ENCODE measurements at regions of chr2 and their contacts with region 1.

Region 1: GRCh38 chr2:168346725-168347477 is 99.5 kb upstream of the STK39 start:
- DNase-seq: peak in 1 of 2 donors; percentile 73
- H3K4me3 ChIP-seq: peak overlapping the region; percentile 46 to 70
- H3K27ac ChIP-seq: no peak overlapping the region
- H3K4me1 ChIP-seq: no peaks in the 10 kb centered on the region
- H3K27me3 ChIP-seq: no peaks in the 10 kb centered on the region
- CTCF ChIP-seq: peak; percentile 74 to 81 (median 78)

Region 2: DNA sequence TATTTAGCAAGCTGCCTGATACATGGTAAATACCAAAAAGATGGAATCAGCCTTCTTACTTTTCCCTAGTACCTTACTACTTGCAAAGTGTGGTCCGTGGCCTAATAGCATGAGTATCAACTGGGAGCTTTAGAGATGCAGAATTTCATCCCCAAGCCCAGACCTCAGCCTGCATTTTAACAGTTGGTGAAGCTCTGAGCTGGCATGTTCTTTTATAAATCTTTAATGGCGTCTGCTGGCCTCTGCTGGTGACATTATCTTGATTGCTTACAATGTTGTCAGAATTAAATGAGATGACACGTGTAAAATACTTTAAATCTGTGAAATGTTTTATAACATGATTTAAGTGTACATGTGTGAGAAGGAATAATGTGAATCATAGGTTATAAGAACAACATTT is 340.4 kb after region 1 on chr2:
- intact Hi-C with region 1: loop called (anchors 2 kb)
- DNase-seq: no peak
- H3K4me3 ChIP-seq: no peak overlapping the region
- H3K27ac ChIP-seq: no peak overlapping the region
- H3K4me1 ChIP-seq: no peaks in the 10 kb centered on the region
- H3K27me3 ChIP-seq: no peaks in the 10 kb centered on the region
- CTCF ChIP-seq: peak in 1 of 3 experiments; percentile 25

Region 3: GRCh38 chr2:168705534-168706470 is 358.9 kb after region 1 on chr2:
- intact Hi-C with region 1: loop called (anchors 5 kb)
- DNase-seq: no peak
- H3K4me3 ChIP-seq: no peak overlapping the region
- H3K27ac ChIP-seq: no peak overlapping the region
- H3K4me1 ChIP-seq: no peaks in the 10 kb centered on the region
- H3K27me3 ChIP-seq: no peaks in the 10 kb centered on the region
- CTCF ChIP-seq: peak in 1 of 3 experiments; percentile 20

Region 4: DNA sequence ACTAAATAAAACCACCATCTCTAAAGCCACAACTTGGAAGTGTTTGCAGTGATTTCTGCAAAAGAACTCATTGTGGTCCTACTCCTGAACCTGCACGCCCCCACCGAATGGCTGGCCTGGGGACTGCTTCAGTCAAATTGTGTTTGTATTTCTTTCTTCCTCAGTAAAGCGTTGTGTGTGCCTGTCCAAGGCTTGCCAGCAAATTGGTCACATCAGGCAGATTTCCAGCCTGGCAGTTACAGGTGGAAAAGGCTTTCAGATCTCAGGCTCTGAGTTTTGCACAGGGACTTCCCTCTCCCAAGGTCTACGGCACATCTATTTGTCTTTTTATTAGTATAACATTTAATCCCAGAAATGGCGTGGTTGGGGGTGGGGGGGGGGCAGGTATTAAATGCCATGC is 401.6 kb after region 1 on chr2:
- intact Hi-C with region 1: no loop called
- DNase-seq: no peak
- H3K4me3 ChIP-seq: no peak overlapping the region
- H3K27ac ChIP-seq: no peak overlapping the region
- H3K4me1 ChIP-seq: no peaks in the 10 kb centered on the region
- H3K27me3 ChIP-seq: no peaks in the 10 kb centered on the region
- CTCF ChIP-seq: no peak

Region 5: DNA sequence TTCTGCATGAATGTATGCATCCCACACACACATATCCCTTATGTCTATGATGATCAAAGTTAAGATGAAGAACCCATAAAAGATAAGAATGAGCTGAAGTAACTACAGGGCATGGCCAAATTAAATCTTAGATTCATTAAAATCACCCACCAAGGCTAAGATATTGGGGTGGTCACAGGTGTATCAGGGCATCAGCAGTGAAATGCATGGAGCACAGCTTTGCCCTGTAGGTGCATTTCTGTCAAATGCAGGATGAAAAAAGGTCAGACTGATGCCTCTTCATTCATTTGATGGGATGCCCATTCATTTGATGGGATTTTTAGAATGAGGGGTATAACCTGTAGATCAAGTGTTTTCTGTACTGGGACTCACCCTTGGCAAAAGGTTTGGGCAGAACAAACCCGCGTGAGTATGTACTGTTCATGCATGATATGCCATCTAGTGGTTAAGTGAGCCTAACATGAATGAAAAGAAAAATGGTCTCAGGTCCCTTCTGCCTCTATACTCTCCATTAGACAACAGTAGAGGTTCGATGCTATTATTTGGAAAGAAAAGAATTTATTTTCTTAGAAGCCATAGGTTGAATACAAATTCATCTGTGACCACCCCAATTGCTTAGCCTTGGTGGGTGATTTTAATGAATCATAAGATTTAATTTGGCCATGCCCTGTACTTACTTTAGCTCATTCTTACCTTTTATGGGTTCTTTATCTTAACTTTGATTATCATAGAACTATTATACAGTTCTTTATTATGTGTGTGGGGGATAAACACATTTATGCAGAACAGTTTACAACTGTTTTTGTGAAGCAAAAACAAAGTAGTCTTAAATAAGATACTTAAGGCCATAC is 412.3 kb after region 1 on chr2:
- intact Hi-C with region 1: loop called (anchors 2 kb)
- DNase-seq: no peak
- H3K4me3 ChIP-seq: no peak overlapping the region
- H3K27ac ChIP-seq: no peak overlapping the region
- H3K4me1 ChIP-seq: no peaks in the 10 kb centered on the region
- H3K27me3 ChIP-seq: no peaks in the 10 kb centered on the region
- CTCF ChIP-seq: peak; percentile 30 to 57 (median 30)

Region 6: DNA sequence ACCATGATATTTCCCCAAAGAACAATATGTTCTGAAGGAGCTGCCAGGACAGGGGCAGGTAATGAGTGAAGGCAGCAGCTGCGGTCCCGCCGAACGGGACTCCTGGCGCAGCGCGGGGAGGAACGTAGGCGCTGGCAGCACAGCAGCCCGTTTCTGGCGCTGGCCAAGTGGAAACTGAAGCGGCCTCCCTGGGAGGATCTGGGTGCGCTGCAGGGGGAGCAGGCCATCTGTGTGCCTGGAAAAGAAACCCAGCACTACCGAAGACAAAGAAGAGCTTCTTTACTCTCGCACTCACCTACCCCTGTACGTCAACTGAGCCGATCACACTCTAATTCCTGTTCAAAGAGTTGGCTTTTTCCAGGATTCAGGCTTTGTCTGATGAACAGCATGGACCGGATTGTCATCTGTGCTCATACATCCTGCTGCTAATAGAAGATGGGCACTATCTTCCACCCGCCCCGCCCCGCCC is 566.0 kb after region 1 on chr2:
- intact Hi-C with region 1: loop called (anchors 10 kb)
- DNase-seq: no peak
- H3K4me3 ChIP-seq: no peak overlapping the region
- H3K27ac ChIP-seq: no peak overlapping the region
- H3K4me1 ChIP-seq: no peaks in the 10 kb centered on the region
- H3K27me3 ChIP-seq: no peaks in the 10 kb centered on the region
- CTCF ChIP-seq: no peak

Measured in ascending aorta (tissue), 2 donors.